ENCODE measurements at regions of chr2 and their contacts with region 1.

Region 1: DNA sequence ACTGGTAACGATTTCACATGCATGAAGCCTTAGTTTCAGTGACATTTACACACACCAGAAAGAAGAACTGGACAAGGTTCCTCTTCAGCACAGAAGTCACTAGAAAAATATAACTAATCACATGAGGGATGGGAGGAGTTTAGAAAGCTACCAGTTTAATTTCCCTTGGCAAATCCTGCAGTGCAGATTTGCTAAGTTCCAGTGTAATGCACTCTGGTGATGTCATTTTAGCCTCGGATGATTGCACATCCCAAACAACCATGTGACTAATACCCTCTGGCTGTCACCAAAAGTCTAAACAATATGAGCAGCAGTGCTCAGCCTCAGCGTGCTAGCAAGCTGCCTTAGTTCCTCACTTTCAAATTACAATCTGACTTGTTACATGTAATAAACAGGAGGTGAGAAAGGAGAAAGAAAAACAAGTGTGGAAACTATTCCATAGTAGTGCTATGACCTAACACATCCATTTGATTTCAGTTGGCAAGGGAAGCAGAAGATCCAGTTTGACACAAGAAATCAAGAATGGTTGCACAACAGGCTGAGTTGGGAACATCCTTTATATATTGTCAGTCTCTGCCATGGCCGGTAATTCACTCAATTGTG is 35.3 kb upstream of the PPP1CB start:
- H3K4me3 Mint-ChIP-seq: no peak overlapping the region
- H3K27ac Mint-ChIP-seq: peak overlapping the region; percentile 100
- H3K4me1 Mint-ChIP-seq: peaks cover 62% of the 10 kb centered on the region
- H3K27me3 Mint-ChIP-seq: no peaks in the 10 kb centered on the region

Region 2: GRCh38 chr2:28621172-28622100 is 94.9 kb before region 1 on chr2:
- intact Hi-C with region 1: loop called (anchors 2 kb)
- H3K4me3 Mint-ChIP-seq: peak overlapping the region; percentile 30
- H3K27ac Mint-ChIP-seq: peak overlapping the region; percentile 61
- H3K4me1 Mint-ChIP-seq: peaks cover 74% of the 10 kb centered on the region
- H3K27me3 Mint-ChIP-seq: no peaks in the 10 kb centered on the region

Region 3: DNA sequence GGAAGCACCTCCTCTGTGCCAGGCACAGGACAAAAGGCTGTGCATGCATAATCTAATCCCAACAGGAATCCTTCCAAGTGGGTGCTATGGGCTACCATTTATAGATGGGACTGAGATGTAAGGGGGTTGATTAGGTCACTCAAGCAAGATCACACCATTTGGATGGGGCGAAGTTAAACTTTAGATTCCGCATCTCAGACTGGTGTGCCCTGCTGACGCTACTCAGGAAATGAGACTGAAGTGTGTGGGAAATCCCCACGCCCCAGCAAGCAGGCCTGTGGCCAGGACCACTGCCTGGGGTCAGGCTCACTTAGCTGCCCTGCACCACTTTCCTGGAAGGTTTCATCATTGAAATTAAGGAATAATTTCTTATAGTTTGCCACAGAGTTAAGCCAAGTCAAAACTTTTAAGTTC is 35.2 kb before region 1 on chr2:
- intact Hi-C with region 1: loop called (anchors 1 kb)
- H3K4me3 Mint-ChIP-seq: no peak overlapping the region
- H3K27ac Mint-ChIP-seq: peak overlapping the region; percentile 61
- H3K4me1 Mint-ChIP-seq: peaks cover 61% of the 10 kb centered on the region
- H3K27me3 Mint-ChIP-seq: peaks cover 7% of the 10 kb centered on the region

Region 4: DNA sequence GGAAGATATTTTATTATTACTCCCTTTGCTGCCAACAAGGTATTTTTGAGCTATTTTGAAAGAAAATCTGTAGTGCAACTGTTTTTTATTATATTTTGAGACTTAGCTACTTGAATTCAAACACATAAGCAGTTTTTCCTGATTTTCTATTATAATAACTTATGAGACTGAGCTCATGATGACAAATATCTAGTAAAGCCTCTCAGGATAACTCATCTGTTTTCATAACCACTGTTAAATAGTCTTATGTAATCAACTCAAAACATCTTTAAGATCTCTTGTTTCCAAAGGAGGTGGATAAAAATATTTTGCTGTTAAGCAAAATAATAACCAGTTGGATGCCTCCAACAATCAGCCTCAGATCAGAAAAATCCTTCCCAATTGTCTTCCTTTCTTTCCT is 13.3 kb after region 1 on chr2:
- intact Hi-C with region 1: no loop called
- H3K4me3 Mint-ChIP-seq: no peak overlapping the region
- H3K27ac Mint-ChIP-seq: no peak overlapping the region
- H3K4me1 Mint-ChIP-seq: no peaks in the 10 kb centered on the region
- H3K27me3 Mint-ChIP-seq: no peaks in the 10 kb centered on the region